Panc1 (cell line): ENCODE measurements at regions of chr11 and their contacts with region 1.

Region 1: DNA sequence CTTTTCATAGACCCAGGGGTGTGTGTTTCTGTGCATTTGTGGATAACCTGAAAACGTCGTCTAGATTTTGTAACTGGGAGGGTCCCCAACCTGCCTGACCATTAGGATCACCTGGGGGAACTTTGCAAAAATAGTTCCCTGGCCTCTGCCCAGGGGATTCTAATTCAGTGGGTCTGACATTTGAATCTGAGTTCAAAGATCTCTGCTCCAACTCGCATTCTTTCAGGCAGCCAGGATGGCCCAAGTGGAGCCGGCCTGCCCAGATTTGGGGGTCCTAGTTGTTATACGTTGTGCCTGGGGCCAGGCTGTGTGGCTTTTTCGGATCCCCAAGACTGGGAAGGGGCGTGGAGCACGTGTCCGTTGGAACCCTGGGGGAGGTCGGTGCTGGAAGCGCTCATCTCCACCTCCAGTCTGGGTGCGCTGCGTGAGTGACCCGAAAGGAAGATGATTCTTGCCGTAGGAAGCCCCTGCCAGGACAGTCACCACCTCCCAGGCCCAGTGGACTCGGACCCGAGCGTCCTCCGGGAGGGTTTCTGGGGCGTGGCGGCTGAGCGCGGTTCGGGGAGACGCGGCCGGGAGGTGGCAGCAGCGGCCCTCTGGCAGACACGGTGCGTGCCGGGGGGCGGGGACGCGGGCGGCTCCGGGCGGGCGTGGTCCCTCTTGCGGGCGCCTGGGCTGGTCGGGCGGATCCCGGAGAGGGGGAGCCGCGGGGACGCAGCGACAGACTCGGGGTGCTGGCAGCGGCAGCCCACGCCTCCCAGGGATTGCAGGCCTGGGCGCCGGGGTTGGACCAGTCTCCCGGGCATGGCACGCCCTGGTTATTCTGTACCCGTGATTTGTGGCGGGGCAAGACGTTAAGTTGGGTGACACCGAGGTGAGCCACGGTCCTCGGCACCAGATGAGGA is 29.2 kb upstream of the PLET1 start:
- DNase-seq: no peak
- ATAC-seq: peak; percentile 98
- H3K4me3 ChIP-seq: peak overlapping the region; percentile 59 to 61
- H3K27ac ChIP-seq: peak overlapping the region; percentile 75
- H3K4me1 ChIP-seq: peaks cover 8% of the 10 kb centered on the region
- H3K27me3 ChIP-seq: 0 out of 2 replicates have a peak, but pooled peaks cover 2% of the 10 kb centered on the region
- CTCF ChIP-seq: peak; percentile 99

Region 2: DNA sequence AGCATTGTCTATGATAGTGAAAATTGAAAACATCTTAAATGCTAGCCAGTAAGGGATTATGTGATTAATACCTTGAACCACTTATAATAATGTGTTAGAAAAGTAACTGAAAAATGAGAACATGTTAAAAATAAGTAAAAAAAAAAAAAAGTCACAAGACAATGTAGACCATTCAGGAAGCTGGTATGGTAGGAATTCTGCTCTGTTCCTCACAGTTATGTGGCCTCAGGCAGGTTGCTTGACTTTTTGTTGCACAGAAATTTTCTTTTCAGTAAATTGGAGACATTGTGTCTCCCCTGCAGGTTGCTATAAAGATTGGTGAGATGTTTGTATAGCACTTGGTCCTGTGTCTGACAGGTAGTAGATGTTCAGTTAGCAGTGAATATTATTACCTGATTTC is 11.9 kb before region 1 on chr11:
- CTCF ChIA-PET with region 1: no interaction called
- POLR2A ChIA-PET with region 1: no interaction called
- in situ Hi-C with region 1: no loop called
- intact Hi-C with region 1: no loop called
- DNase-seq: no peak
- ATAC-seq: no peak
- H3K4me3 ChIP-seq: no peak overlapping the region
- H3K27ac ChIP-seq: no peak overlapping the region
- H3K4me1 ChIP-seq: peaks cover 4% of the 10 kb centered on the region; the same call in 1 of the 2 replicates
- H3K27me3 ChIP-seq: peaks cover 2% of the 10 kb centered on the region
- CTCF ChIP-seq: no peak

Region 3: GRCh38 chr11:112555491-112556364 is 265.9 kb after region 1 on chr11:
- CTCF ChIA-PET with region 1: no interaction called
- POLR2A ChIA-PET with region 1: no interaction called
- in situ Hi-C with region 1: no loop called
- intact Hi-C with region 1: loop called (anchors 10 kb)
- DNase-seq: peak; percentile 12
- ATAC-seq: peak; percentile 77
- H3K4me3 ChIP-seq: no peak overlapping the region
- H3K27ac ChIP-seq: no peak overlapping the region
- H3K4me1 ChIP-seq: no peaks in the 10 kb centered on the region
- H3K27me3 ChIP-seq: no peaks in the 10 kb centered on the region; the same call in 1 of the 2 replicates
- CTCF ChIP-seq: peak; percentile 79

Region 4: DNA sequence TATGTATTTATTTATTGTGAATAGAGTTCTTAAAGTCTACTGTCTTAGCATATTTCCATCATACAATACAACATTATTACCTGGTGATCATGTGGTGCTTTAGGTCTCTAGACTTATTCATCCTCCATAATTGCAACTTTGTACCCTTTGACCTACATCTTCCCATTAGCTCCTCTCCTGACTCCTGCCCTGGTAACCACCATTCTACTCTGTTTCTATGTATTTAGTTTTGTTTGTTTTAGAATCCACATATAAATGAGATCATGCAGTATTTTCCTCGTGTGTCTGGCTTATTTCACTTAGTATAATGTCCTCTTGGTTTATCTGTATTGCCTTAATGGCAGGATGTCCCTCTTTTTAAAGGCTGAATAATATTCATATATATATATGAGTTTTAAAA is 694.0 kb after region 1 on chr11:
- CTCF ChIA-PET with region 1: no interaction called
- POLR2A ChIA-PET with region 1: no interaction called
- in situ Hi-C with region 1: no loop called
- intact Hi-C with region 1: no loop called
- DNase-seq: no peak
- ATAC-seq: no peak
- H3K4me3 ChIP-seq: no peak overlapping the region
- H3K27ac ChIP-seq: no peak overlapping the region
- H3K4me1 ChIP-seq: no peaks in the 10 kb centered on the region
- H3K27me3 ChIP-seq: no peaks in the 10 kb centered on the region
- CTCF ChIP-seq: no peak

Region 5: DNA sequence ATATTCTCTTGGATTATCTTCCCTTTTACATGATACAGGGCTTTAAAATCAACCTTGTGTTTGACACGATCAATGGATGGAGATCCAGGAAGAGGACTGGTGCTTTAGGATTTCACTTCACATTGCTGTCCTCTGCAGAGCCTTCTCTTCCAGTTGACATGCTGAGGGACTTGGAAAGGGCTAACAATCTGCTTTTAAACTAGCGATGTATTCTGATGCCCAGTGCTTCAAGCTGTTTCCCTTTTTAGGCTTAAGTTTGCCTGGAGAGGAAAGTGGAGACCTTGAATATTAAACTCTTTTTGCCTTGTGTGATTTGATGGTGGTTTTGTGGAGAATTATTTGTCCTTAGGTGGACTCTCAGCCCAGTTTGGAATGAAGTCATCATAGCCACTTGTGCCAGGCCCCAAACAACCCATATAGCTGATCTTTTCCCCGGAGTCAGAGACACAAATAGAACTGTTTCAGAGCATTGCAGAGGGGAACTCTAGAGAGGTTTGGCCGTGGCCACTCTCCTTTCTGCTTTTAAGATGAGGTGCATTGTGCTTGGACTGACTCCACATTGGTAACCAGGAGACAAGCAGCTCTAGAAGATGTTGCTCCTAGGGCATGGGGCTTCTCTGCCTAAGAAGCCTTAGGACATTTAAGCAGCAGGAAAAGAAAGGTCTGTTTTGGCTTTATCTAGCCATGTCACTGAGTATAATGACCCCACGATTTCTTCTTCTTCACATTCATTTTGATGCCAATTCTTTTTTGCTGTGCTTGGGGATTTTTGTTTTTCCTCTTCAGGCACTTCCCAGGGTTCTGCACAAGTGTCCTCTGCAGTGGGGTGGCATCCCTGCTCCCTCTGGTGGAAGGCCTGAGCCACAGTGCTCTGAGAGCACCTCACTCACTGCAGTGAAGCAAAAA is 824.2 kb after region 1 on chr11:
- CTCF ChIA-PET with region 1: no interaction called
- POLR2A ChIA-PET with region 1: no interaction called
- in situ Hi-C with region 1: no loop called
- intact Hi-C with region 1: loop called (anchors 2 kb)
- DNase-seq: peak; percentile 24
- ATAC-seq: peak; percentile 95
- H3K4me3 ChIP-seq: no peak overlapping the region
- H3K27ac ChIP-seq: no peak overlapping the region
- H3K4me1 ChIP-seq: no peaks in the 10 kb centered on the region
- H3K27me3 ChIP-seq: peaks cover 13% of the 10 kb centered on the region
- CTCF ChIP-seq: peak; percentile 78